ENCODE measurements at regions of chr3 and their contacts with region 1.

Region 1: DNA sequence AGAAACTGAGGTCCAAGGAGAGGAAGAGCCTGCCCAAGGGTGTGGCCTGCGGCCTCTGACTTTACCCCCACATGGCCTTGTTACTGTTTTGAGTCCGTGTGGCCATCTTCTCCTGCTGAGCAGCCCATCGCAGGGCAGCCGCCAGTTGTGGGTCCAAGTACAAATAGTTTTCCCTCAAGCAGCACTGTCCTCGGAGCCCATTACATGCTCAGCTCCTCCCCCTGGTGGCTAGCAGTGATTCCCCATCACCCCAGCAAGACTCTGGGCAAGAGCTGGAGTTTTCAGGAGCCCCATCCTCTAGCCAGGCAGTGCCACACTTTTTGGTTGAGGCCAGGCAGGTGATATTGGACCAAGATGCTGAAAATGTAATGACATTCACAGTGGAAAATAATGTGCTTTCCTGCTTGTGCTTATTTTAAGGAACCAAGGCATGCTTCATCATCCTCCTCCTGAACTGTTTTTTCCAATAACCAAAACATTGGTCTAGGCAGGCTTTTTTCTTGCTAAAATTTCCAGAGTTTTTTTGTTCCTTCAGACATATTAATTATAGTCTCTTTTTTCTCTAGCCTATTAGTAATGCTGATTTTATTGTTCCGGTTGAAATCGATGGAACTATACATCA is 23.2 kb upstream of the VILL start:
- DNase-seq: peak; percentile 71
- H3K4me3 Mint-ChIP-seq: no peak overlapping the region
- H3K27ac Mint-ChIP-seq: peak overlapping the region; percentile 57
- H3K4me1 Mint-ChIP-seq: peaks cover 10% of the 10 kb centered on the region
- H3K27me3 Mint-ChIP-seq: no peaks in the 10 kb centered on the region
- CTCF ChIP-seq: peak; percentile 74

Region 2: DNA sequence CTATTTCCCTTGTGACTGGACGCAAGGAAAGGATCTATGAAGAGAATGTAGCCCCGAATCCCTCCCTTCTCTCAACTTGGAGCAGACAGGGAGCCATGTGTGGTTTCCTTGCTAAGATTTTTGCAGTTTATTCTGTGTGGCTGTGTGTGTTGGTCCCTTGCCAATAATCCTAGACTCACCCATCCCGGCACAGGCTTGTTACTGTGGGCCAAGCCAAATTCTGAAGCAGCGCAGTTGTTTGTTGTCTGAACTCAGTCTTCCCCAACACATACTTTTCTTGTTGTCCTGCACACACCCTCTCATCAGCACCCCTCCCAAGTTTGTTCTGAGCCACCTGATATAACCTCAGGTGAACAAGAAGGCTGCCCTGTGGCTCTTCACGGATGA is 298.9 kb before region 1 on chr3:
- CTCF ChIA-PET with region 1: no interaction called
- POLR2A ChIA-PET with region 1: no interaction called
- intact Hi-C with region 1: no loop called
- DNase-seq: peak; percentile 36
- H3K4me3 Mint-ChIP-seq: no peak overlapping the region
- H3K27ac Mint-ChIP-seq: no peak overlapping the region
- H3K4me1 Mint-ChIP-seq: peaks cover 13% of the 10 kb centered on the region
- H3K27me3 Mint-ChIP-seq: peaks cover 37% of the 10 kb centered on the region
- CTCF ChIP-seq: no peak

Region 3: GRCh38 chr3:37862219-37862902 is 105.0 kb before region 1 on chr3:
- CTCF ChIA-PET with region 1: interaction called, 207 read pairs
- POLR2A ChIA-PET with region 1: interaction called, 6 read pairs
- intact Hi-C with region 1: no loop called
- DNase-seq: peak; percentile 50
- H3K4me3 Mint-ChIP-seq: peak overlapping the region; percentile 78
- H3K27ac Mint-ChIP-seq: peak overlapping the region; percentile 2
- H3K4me1 Mint-ChIP-seq: peaks cover 24% of the 10 kb centered on the region
- H3K27me3 Mint-ChIP-seq: no peaks in the 10 kb centered on the region
- CTCF ChIP-seq: no peak

Region 4: GRCh38 chr3:37935756-37936666 is 31.4 kb before region 1 on chr3:
- CTCF ChIA-PET with region 1: interaction called, 11 read pairs
- POLR2A ChIA-PET with region 1: interaction called, 3 read pairs
- intact Hi-C with region 1: no loop called
- DNase-seq: peak; percentile 87
- H3K4me3 Mint-ChIP-seq: peak overlapping the region; percentile 33
- H3K27ac Mint-ChIP-seq: peak overlapping the region; percentile 95
- H3K4me1 Mint-ChIP-seq: peaks cover 47% of the 10 kb centered on the region
- H3K27me3 Mint-ChIP-seq: no peaks in the 10 kb centered on the region
- CTCF ChIP-seq: no peak

Region 5: GRCh38 chr3:37956723-37957528 is 10.4 kb before region 1 on chr3:
- CTCF ChIA-PET with region 1: interaction called, 81 read pairs
- POLR2A ChIA-PET with region 1: interaction called, 3 read pairs
- intact Hi-C with region 1: no loop called
- DNase-seq: no peak
- H3K4me3 Mint-ChIP-seq: no peak overlapping the region
- H3K27ac Mint-ChIP-seq: peak overlapping the region; percentile 46
- H3K4me1 Mint-ChIP-seq: no peaks in the 10 kb centered on the region
- H3K27me3 Mint-ChIP-seq: no peaks in the 10 kb centered on the region
- CTCF ChIP-seq: no peak

Region 6: DNA sequence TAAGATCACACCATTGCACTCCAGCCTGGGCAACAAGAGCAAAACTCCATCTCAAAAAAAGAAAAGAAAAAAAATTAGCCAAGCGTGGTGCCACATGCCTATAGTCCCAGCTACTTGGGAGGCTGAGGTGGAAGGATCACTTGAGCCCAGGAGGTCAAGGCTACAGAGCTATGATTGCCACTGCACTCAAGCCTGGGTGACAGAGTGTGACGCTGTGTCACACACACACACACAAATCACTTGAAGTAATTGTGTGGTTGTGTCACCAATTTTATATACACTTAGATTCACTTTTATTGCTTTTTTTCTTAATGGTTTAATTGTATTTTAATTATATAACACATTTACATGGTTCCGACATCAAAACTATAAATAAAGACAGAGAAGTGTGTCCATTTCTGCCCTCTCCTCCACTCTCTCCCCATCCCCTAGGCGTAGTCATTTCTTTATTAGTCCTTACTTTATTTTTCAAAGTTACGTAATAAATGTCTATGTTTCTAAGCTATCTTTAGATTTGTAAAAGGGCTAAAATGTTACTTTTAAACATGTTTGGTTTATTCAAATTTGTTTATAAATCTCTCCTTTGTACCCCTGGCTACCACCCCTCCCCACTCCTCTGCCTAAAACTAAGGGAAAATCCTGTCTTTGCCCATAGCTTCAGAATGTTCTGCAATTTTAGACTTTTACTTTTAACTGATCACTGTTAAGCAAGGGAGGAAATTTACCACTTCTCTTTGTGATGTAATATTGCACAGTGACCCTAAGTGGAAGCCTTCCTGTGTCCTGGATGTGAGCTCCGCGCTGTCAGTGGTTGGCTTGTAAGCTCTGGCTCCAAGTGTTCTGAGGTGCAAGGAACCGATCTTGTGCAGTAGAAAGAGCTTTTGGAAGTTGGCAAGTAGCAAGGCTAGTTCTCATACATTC is 12.4 kb after region 1 on chr3:
- CTCF ChIA-PET with region 1: interaction called, 22 read pairs
- POLR2A ChIA-PET with region 1: interaction called, 3 read pairs
- intact Hi-C with region 1: no loop called
- DNase-seq: no peak
- H3K4me3 Mint-ChIP-seq: no peak overlapping the region
- H3K27ac Mint-ChIP-seq: no peak overlapping the region
- H3K4me1 Mint-ChIP-seq: no peaks in the 10 kb centered on the region
- H3K27me3 Mint-ChIP-seq: no peaks in the 10 kb centered on the region
- CTCF ChIP-seq: no peak

Measured in MCF 10A (cell line).